ENCODE measurements at regions of chr16 and their contacts with region 1.

Region 1: GRCh38 chr16:96935-97381 is 18.9 kb downstream of the MPG start:
- DNase-seq: peak; percentile 90
- H3K4me3 Mint-ChIP-seq: no peak overlapping the region
- H3K27ac Mint-ChIP-seq: no peak overlapping the region
- H3K4me1 Mint-ChIP-seq: peaks cover 8% of the 10 kb centered on the region
- H3K27me3 Mint-ChIP-seq: no peaks in the 10 kb centered on the region

Region 2: DNA sequence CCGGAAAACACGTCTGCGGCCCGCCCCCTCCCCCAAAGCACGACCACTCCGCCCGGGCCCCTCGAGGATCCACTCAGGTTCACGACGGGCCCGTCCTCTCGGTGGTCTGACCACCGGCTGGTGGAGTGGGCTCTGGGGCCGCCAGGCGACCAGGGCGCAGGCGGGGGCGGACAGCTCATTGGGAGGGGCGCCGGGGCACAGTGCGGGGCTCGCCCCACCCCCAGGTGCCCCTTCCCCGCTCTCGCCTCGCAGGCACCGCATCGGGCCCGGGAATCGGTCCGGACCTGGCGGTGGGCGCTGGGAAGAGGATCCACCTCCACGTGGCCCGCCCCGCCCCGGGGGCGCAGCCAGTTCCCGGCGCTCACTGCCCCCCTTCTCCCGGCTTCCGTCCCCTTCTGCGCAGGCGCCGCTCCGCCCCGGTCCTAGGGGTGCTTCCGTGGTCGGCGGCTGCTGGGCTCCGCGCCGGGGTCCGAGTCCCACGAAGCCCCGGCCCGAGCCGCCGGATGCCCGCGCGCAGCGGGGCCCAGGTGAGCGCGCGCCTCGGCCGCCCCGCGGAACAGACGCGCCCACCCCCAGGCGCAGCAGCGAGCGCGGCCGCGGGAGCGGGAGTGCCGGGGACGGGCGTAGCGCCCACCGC is 19.0 kb before region 1 on chr16 and contains the start of gene MPG:
- CTCF ChIA-PET with region 1: interaction called, 44 read pairs
- POLR2A ChIA-PET with region 1: no interaction called
- DNase-seq: peak; percentile 86
- H3K4me3 Mint-ChIP-seq: peak within 1 kb of the TSS; percentile 85
- H3K27ac Mint-ChIP-seq: peak within 1 kb of the TSS; percentile 86
- H3K4me1 Mint-ChIP-seq: peaks cover 35% of the 10 kb centered on the region
- H3K27me3 Mint-ChIP-seq: peaks cover 22% of the 10 kb centered on the region
- total RNA-seq, gene MPG: 47.2 to 52.6 TPM

Region 3: GRCh38 chr16:84718-85406 is 12.1 kb before region 1 on chr16:
- CTCF ChIA-PET with region 1: interaction called, 15 read pairs
- POLR2A ChIA-PET with region 1: no interaction called
- DNase-seq: peak; percentile 41
- H3K4me3 Mint-ChIP-seq: no peak overlapping the region
- H3K27ac Mint-ChIP-seq: peak overlapping the region; percentile 86
- H3K4me1 Mint-ChIP-seq: peaks cover 37% of the 10 kb centered on the region
- H3K27me3 Mint-ChIP-seq: no peaks in the 10 kb centered on the region